Endothelial cell of umbilical vein (primary cell): ENCODE measurements at regions of chr11 and their contacts with region 1.

Region 1: GRCh38 chr11:3797329-3798095 is at the start of gene NUP98:
- DNase-seq: peak; percentile 100
- H3K4me3 ChIP-seq: peak within 1 kb of the TSS; percentile 72 to 99 (median 90)
- H3K27ac ChIP-seq: peak within 1 kb of the TSS; percentile 76
- H3K4me1 ChIP-seq: peaks cover 15% of the 10 kb centered on the region
- H3K27me3 ChIP-seq: no peaks in the 10 kb centered on the region
- CTCF ChIP-seq: peak in 1 of 2 donors; percentile 2
- POLR2A ChIP-seq: peak; percentile 90
- total RNA-seq, gene NUP98: 80.8 and 92.7 TPM in 2 replicates

Region 2: GRCh38 chr11:2186669-2187279 is 1610.7 kb before region 1 on chr11:
- CTCF ChIA-PET with region 1: no interaction called
- POLR2A ChIA-PET with region 1: no interaction called
- dilution Hi-C with region 1: no loop called
- intact Hi-C with region 1: no loop called
- DNase-seq: peak; percentile 11
- H3K4me3 ChIP-seq: no peak overlapping the region
- H3K27ac ChIP-seq: no peak overlapping the region
- H3K4me1 ChIP-seq: no peaks in the 10 kb centered on the region
- H3K27me3 ChIP-seq: peaks cover 0 to 6% of the 10 kb centered on the region in 2 experiments
- CTCF ChIP-seq: peak; percentile 6 to 49
- POLR2A ChIP-seq: no peak

Region 3: DNA sequence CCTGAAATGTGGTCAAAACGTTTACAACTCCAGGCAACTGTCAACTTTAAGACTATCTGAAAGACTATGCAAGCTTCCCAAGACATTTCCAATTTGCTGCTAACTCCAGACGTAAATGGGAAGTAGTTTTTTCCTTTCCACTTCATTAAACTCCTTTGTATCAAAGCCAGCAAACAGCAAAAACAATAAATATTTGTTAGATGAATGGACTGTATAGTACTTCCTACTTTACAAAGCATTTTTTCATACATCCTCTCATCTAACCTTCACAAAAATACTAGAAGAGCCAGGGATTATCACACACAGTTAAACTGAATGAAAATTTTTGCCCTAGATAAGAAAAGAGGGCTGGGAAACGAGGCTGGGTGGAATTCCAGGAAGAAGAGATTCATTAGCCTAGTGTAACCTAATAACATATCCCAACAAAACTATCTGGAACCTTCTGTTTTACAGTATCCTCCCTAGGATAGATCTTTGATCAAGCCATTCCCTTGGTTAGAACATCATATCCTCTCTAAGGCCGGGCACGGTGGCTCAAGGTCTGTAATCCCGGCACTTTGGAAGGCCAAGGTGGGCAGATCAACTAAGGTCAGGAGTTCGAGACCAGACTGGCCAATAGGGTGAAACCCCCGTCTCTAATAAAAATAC is 10.6 kb before region 1 on chr11:
- CTCF ChIA-PET with region 1: no interaction called
- POLR2A ChIA-PET with region 1: no interaction called
- dilution Hi-C with region 1: no loop called
- intact Hi-C with region 1: loop called (anchors 1 kb)
- DNase-seq: peak; percentile 65
- H3K4me3 ChIP-seq: peak overlapping the region in 1 of 3 experiments; percentile 27
- H3K27ac ChIP-seq: peak overlapping the region; percentile 47
- H3K4me1 ChIP-seq: peaks cover 15% of the 10 kb centered on the region
- H3K27me3 ChIP-seq: no peaks in the 10 kb centered on the region
- CTCF ChIP-seq: no peak
- POLR2A ChIP-seq: no peak